Activated B cell treated with CpG ODN at 0.5 μM for 24 hours (primary cell): ENCODE measurements at regions of chr15 and their contacts with region 1.

Region 1: GRCh38 chr15:43510200-43511011 is 7.0 kb upstream of the MAP1A start:
- DNase-seq: peak; percentile 96
- ATAC-seq: peak; percentile 96
- H3K4me3 Mint-ChIP-seq: peak overlapping the region; percentile 92
- H3K27ac Mint-ChIP-seq: peak overlapping the region; percentile 94
- H3K4me1 Mint-ChIP-seq: peaks cover 14% of the 10 kb centered on the region
- H3K27me3 Mint-ChIP-seq: peaks cover 8% of the 10 kb centered on the region
- CTCF ChIP-seq: no peak

Region 2: DNA sequence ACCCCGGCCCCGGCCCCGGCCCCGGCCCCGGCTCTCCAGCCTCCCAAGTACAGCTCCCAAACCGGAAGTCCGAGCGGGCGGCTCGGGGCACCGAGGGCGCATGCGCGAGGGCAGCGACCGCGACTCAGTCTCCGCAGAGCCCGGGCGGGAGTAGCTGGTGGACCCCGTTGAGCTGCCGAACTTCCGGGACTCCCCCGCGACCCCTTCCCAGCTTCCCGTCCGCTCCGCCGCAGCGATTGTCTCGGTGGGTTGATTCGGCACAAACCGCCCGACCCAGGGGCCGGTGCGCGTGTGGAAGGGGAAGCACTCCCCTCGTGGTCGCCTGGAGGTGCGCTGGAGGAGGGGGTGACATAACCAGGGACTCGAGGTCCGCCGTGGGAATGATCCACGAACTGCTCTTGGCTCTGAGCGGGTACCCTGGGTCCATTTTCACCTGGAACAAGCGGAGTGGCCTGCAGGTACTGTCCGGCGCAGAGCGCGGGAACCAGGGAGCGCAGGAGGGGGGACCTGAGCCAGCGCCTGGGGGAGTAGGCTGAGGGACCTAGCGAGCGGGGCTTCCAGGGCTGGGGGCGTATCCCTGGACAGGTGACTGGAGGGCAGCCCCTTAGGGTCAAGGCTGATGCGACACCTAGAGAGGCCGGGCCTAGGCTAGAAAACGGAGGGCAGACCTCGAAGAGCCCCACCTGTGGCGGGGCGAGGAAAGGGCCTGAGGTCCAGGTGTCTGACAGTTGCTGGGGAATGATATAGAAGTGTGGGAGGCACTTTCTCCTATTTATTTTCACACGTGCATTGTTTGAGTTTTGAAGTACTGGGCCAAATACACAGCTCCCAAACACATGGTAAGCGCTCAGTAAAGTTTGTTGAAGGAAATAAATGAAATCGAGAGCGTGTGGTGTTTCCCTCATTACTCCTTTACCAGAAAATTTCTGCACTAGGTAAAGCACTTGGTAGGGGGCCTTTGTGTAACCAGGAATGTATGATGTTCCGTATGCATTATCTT is 139.1 kb before region 1 on chr15 and contains the starts of genes TUBGCP4 and ZSCAN29:
- CTCF ChIA-PET with region 1: interaction called, 10 read pairs
- POLR2A ChIA-PET with region 1: interaction called, 9 read pairs
- intact Hi-C with region 1: loop called (anchors 1 kb)
- DNase-seq: peak; percentile 83
- ATAC-seq: peak; percentile 82
- H3K4me3 Mint-ChIP-seq: peak within 1 kb of the TSS; percentile 93
- H3K27ac Mint-ChIP-seq: peak within 1 kb of the TSS; percentile 87
- H3K4me1 Mint-ChIP-seq: peaks cover 58% of the 10 kb centered on the region
- H3K27me3 Mint-ChIP-seq: no peaks in the 10 kb centered on the region
- CTCF ChIP-seq: no peak
- total RNA-seq, gene TUBGCP4: 24.0 and 31.2 TPM in 2 replicates
- total RNA-seq, gene ZSCAN29: 45.6 and 50.6 TPM in 2 replicates

Region 3: DNA sequence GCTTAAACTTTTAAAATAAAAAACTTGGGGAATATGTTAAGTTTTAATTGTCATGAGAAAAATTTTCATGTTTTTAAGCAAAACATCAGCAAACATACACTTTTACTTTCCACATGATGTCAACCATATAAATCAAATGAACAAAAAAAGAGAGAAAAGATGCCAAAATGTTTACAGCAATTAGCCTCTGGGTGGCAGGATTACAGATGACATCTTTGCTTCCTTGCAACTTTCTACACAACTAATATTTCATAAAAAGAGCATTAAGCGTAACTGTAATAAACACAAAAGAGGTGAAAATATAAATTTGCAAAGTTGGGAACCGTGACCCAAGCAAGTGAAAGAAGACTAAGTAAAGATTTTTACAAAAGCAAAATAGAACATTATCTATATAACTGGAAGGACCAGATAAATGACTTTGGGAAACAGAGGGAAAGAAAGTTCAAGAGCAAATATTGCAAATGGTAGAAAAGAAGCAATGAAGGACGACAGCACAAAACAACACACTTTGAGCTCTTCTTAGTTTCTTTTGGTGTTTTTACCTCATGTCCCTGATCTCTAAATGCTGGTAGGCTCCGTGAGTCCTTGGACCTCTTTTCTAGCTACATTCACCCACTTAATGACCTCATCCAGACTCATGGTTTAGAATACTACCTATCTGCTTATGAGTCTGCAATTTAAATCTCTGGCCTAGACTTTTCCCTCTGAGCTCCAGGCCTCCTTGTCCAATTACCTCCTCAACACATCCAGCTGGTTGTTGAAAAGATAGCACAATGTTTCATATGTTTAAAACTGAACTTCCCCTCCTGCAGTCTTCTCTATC is 26.9 kb before region 1 on chr15:
- CTCF ChIA-PET with region 1: interaction called, 7 read pairs
- POLR2A ChIA-PET with region 1: no interaction called
- intact Hi-C with region 1: loop called (anchors 2 kb)
- DNase-seq: no peak
- ATAC-seq: no peak
- H3K4me3 Mint-ChIP-seq: no peak overlapping the region
- H3K27ac Mint-ChIP-seq: no peak overlapping the region
- H3K4me1 Mint-ChIP-seq: peaks cover 7% of the 10 kb centered on the region
- H3K27me3 Mint-ChIP-seq: no peaks in the 10 kb centered on the region
- CTCF ChIP-seq: no peak

Region 4: GRCh38 chr15:43749690-43750345 is 239.4 kb after region 1 on chr15:
- CTCF ChIA-PET with region 1: no interaction called
- POLR2A ChIA-PET with region 1: interaction called, 4 read pairs
- intact Hi-C with region 1: loop called (anchors 5 kb)
- DNase-seq: no peak
- ATAC-seq: peak; percentile 41
- H3K4me3 Mint-ChIP-seq: peak overlapping the region; percentile 72
- H3K27ac Mint-ChIP-seq: peak overlapping the region; percentile 87
- H3K4me1 Mint-ChIP-seq: peaks cover 70% of the 10 kb centered on the region
- H3K27me3 Mint-ChIP-seq: no peaks in the 10 kb centered on the region
- CTCF ChIP-seq: no peak

Region 5: DNA sequence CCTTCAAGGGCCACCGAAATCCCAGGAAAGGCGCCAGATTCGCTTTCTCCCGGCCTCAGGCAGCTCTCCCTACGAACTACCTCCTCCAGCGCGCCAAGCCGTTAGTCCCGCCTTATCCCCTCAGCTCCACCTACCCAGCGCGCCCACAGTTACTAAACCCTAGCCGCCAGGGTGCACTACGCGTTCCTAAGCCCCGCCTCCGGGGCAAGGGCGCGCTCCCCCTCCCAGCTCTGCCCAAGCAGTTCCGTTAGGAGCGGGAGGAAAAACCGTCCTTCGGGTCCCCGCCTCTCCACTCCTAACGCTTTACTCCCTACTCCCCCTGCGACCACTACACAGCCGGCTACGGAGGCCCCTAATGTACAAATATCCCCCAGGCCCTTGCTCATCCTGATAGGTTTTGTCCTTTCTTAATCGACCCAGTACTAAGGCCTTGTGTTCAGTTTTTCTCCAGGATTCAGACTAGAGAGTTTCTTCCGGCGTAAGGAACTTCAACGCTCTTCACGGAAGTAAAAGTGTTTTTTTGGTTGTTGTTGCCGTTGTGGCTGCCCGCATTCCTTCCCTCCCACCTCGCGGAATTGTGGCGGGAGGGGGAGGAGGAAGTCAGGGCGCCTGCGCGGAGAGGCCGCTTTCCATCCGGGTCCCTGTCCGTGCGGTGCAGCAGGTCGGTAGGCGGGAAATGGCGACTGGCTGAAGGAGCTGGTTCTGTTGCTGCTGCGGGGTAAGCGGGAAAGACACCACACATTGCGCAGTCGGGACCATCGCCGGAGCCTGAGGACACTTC is 916.8 kb after region 1 on chr15 and contains the start of gene CTDSPL2:
- CTCF ChIA-PET with region 1: no interaction called
- POLR2A ChIA-PET with region 1: no interaction called
- intact Hi-C with region 1: loop called (anchors 2 kb)
- DNase-seq: peak; percentile 87
- ATAC-seq: peak; percentile 97
- H3K4me3 Mint-ChIP-seq: peak within 1 kb of the TSS; percentile 100
- H3K27ac Mint-ChIP-seq: peak within 1 kb of the TSS; percentile 99
- H3K4me1 Mint-ChIP-seq: peaks cover 41% of the 10 kb centered on the region
- H3K27me3 Mint-ChIP-seq: no peaks in the 10 kb centered on the region
- CTCF ChIP-seq: no peak
- total RNA-seq, gene CTDSPL2: 44.6 and 46.8 TPM in 2 replicates